HCT116 (cell line): ENCODE measurements at regions of chr2 and their contacts with region 1.

Region 1: GRCh38 chr2:38274286-38275276 is 102.5 kb downstream of the ATL2 start:
- DNase-seq: peak; percentile 79
- ATAC-seq: peak; percentile 92
- H3K4me3 ChIP-seq: no peak overlapping the region
- H3K27ac ChIP-seq: no peak overlapping the region
- H3K4me1 ChIP-seq: no peaks in the 10 kb centered on the region
- H3K27me3 ChIP-seq: no peaks in the 10 kb centered on the region
- CTCF ChIP-seq: peak; percentile 37 to 78 (median 72); a peak in 5 of 6 replicates
- POLR2A ChIP-seq: no peak
- RAD21 ChIP-seq: peak; percentile 93

Region 2: DNA sequence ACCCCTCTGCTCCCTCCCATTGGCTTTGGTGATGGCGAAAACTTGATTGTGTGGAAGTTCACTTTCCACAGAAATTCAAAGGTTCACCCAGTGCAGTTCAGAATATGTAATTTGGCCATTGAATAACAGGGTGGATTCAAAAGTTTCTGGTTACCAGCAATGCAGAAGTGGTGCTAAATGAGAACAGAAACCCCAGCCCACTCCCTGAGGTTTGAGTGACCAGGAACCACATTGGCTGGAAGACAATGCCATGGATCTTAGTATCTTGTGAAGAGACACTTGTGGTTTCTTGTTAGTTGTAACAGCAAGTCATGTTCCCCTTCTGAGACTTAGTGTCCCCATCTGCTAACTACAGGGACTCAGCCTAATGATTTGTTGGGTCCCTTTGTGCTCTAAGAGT is 880.3 kb before region 1 on chr2:
- CTCF ChIA-PET with region 1: interaction called, 24 read pairs
- POLR2A ChIA-PET with region 1: no interaction called
- RAD21 ChIA-PET with region 1: no interaction called
- intact Hi-C with region 1: loop called (anchors 1 kb)
- DNase-seq: no peak
- ATAC-seq: no peak
- H3K4me3 ChIP-seq: no peak overlapping the region
- H3K27ac ChIP-seq: no peak overlapping the region
- H3K4me1 ChIP-seq: peaks cover 3 to 18% of the 10 kb centered on the region in 2 experiments; a peak in 3 of 4 replicates
- H3K27me3 ChIP-seq: no peaks in the 10 kb centered on the region
- CTCF ChIP-seq: no peak
- POLR2A ChIP-seq: no peak
- RAD21 ChIP-seq: no peak

Region 3: DNA sequence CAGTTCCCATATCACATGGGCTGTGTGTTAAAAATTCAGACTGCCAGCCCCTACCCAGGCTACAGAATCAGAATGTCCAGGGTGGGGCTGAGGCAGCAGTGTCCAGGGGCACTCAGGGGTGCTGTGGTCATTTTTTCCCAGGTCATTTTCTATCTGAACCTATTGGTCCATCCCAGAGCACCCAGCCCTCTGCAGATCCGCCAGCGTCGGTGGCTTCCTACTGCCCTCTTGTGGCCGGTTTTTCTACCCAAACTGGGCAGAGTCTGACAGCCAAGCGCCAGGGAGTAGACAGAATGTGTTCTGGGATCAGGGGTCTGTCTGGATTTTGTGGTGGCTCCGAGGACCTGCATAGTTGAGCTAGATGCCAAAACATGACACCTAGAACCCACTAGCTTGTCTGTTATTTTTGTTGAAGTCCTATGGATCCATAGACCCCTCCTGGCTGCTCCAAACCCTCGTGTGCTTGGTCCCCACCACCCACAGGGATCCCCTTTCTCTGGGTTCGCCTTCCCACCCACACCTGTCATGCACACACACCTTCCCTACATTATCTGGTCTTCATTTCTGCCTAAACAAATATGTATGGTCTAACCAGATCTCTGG is 383.6 kb before region 1 on chr2:
- CTCF ChIA-PET with region 1: interaction called, 6 read pairs
- POLR2A ChIA-PET with region 1: no interaction called
- RAD21 ChIA-PET with region 1: no interaction called
- intact Hi-C with region 1: loop called (anchors 2 kb)
- DNase-seq: peak; percentile 48
- ATAC-seq: peak; percentile 100
- H3K4me3 ChIP-seq: no peak overlapping the region
- H3K27ac ChIP-seq: no peak overlapping the region
- H3K4me1 ChIP-seq: no peaks in the 10 kb centered on the region
- H3K27me3 ChIP-seq: no peaks in the 10 kb centered on the region
- CTCF ChIP-seq: peak; percentile 69 to 87 (median 83)
- POLR2A ChIP-seq: no peak
- RAD21 ChIP-seq: peak; percentile 81

Region 4: GRCh38 chr2:37982147-37982582 is 292.4 kb before region 1 on chr2:
- CTCF ChIA-PET with region 1: interaction called, 14 read pairs
- POLR2A ChIA-PET with region 1: no interaction called
- RAD21 ChIA-PET with region 1: no interaction called
- intact Hi-C with region 1: loop called (anchors 1 kb)
- DNase-seq: peak; percentile 44
- ATAC-seq: peak; percentile 67
- H3K4me3 ChIP-seq: no peak overlapping the region
- H3K27ac ChIP-seq: no peak overlapping the region
- H3K4me1 ChIP-seq: peaks cover 0 to 6% of the 10 kb centered on the region in 2 experiments; a peak in 2 of 4 replicates
- H3K27me3 ChIP-seq: no peaks in the 10 kb centered on the region
- CTCF ChIP-seq: peak; percentile 71 to 95 (median 82); a peak in 5 of 6 replicates
- POLR2A ChIP-seq: no peak
- RAD21 ChIP-seq: peak; percentile 75

Region 5: DNA sequence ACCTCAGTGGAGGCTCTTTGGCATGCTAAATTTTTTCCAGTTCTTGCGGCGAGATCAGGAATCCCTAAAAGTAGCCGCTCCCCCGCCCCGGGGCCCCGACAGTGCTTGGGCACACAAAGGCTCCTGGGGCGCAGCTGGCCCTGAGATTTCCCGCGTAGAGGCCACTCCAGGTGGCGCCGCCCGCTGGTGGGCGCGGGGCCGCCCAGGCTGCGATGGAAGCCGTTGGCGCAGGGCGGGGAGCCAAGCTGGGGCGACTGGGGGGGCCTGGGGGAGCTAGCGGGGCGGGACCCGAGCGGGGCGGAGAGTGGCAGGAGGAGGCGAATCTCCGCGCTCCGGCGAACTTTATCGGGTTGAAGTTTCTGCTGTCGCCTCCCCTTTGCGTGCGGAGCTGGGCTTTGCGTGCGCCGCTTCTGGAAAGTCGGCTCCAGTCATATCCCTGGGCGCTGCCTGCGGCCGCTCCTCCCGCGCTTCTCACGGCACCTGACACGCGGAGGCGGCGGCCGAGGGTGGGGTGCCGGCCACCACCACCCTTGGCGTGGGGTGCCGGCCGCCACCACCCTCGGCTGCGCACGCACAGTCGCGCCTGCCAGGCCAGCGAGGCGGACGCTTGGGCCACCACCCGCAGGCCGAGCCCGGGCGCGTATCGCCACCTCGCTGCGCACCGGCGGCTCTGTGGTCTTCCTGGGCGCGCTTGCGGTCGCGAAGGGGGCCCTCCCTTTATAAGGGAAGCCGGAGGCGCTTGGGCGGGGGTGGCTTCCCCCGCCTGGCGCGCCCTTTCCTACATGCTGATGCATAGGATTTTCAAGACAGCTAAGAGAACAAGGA is 197.8 kb before region 1 on chr2:
- CTCF ChIA-PET with region 1: interaction called, 27 read pairs
- POLR2A ChIA-PET with region 1: interaction called, 3 read pairs
- RAD21 ChIA-PET with region 1: no interaction called
- intact Hi-C with region 1: no loop called
- DNase-seq: peak; percentile 48
- ATAC-seq: peak; percentile 77
- H3K4me3 ChIP-seq: peak overlapping the region; percentile 42 to 59
- H3K27ac ChIP-seq: peak overlapping the region; percentile 73
- H3K4me1 ChIP-seq: peaks cover 5 to 28% of the 10 kb centered on the region in 2 experiments
- H3K27me3 ChIP-seq: no peaks in the 10 kb centered on the region
- CTCF ChIP-seq: peak in 2 of 3 experiments; percentile 45 to 49
- POLR2A ChIP-seq: no peak
- RAD21 ChIP-seq: no peak

Region 6: DNA sequence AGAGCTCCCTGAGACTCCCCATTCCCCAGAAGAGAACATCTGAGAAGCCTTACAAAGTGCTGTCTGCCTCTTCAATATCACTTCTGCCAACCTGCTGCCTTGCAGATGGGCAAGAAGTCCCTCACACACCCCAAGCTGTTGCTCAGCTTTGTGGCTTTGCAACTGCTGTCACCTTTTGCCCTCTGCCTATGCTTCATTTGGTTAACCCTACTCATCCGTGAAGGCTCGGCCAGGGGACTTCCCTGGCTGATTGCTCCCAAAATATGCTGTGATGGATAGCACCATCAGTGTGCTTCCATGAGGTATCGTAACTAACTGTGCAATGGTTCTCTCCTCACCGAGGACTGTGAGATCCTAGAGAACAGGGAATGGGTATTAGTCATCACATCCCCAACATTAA is 109.7 kb before region 1 on chr2:
- CTCF ChIA-PET with region 1: interaction called, 4 read pairs
- POLR2A ChIA-PET with region 1: no interaction called
- RAD21 ChIA-PET with region 1: no interaction called
- intact Hi-C with region 1: loop called (anchors 5 kb)
- DNase-seq: no peak
- ATAC-seq: no peak
- H3K4me3 ChIP-seq: no peak overlapping the region
- H3K27ac ChIP-seq: no peak overlapping the region
- H3K4me1 ChIP-seq: no peaks in the 10 kb centered on the region
- H3K27me3 ChIP-seq: no peaks in the 10 kb centered on the region
- CTCF ChIP-seq: no peak
- POLR2A ChIP-seq: no peak
- RAD21 ChIP-seq: no peak

Region 7: GRCh38 chr2:38560092-38560491 is 285.5 kb after region 1 on chr2:
- CTCF ChIA-PET with region 1: no interaction called
- POLR2A ChIA-PET with region 1: no interaction called
- RAD21 ChIA-PET with region 1: no interaction called
- intact Hi-C with region 1: no loop called
- DNase-seq: no peak
- ATAC-seq: no peak
- H3K4me3 ChIP-seq: no peak overlapping the region
- H3K27ac ChIP-seq: no peak overlapping the region
- H3K4me1 ChIP-seq: no peaks in the 10 kb centered on the region
- H3K27me3 ChIP-seq: no peaks in the 10 kb centered on the region
- CTCF ChIP-seq: no peak
- POLR2A ChIP-seq: no peak
- RAD21 ChIP-seq: no peak